CD4-positive, alpha-beta memory T cell (primary cell): ENCODE measurements at regions of chr14 and their contacts with region 1.

Region 1: DNA sequence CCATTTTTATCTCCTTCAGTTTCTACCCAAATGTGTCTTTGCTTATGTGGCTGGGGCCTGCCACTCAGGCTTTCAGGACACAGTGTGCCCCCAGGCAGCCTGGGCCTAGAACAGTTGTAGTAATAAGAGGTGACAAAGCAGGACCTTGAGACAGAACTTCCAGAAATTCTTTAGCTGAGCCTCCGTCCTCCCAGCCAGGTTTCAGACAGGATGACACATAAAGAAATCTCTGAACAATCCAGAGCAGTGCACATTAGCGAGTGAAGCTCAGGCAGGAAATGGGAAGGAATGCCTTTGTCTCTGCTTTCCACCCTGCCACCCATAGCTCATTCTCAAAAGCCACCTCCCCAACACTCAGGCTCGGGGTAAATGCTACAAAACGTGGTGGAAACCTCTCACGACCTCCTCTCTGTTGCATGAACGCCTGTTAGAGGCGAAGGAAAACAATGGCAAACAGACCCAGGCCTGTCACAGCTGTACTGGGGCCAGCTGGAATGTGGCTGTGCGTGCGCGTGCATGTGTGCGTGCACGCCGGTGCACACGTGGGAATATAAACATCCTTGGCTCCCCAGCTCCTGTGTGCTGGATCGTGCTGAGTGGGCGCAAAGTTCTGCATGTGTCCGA is 286.7 kb downstream of the ZFP36L1 start:
- DNase-seq: peak in 2 of 5 donors; percentile 9 to 39
- H3K4me3 ChIP-seq: peak overlapping the region; percentile 15 to 28
- H3K4me3 Mint-ChIP-seq: peak overlapping the region; percentile 63 to 86 (median 74)
- H3K27ac ChIP-seq: peak overlapping the region; percentile 27
- H3K27ac Mint-ChIP-seq: peak overlapping the region; percentile 60 to 93 (median 89)
- H3K4me1 ChIP-seq: peaks cover 45% of the 10 kb centered on the region
- H3K4me1 Mint-ChIP-seq: peaks cover 40 to 63% (median 52%) of the 10 kb centered on the region in 4 donors
- H3K27me3 ChIP-seq: no peaks in the 10 kb centered on the region
- H3K27me3 Mint-ChIP-seq: no peaks in the 10 kb centered on the region

Region 2: DNA sequence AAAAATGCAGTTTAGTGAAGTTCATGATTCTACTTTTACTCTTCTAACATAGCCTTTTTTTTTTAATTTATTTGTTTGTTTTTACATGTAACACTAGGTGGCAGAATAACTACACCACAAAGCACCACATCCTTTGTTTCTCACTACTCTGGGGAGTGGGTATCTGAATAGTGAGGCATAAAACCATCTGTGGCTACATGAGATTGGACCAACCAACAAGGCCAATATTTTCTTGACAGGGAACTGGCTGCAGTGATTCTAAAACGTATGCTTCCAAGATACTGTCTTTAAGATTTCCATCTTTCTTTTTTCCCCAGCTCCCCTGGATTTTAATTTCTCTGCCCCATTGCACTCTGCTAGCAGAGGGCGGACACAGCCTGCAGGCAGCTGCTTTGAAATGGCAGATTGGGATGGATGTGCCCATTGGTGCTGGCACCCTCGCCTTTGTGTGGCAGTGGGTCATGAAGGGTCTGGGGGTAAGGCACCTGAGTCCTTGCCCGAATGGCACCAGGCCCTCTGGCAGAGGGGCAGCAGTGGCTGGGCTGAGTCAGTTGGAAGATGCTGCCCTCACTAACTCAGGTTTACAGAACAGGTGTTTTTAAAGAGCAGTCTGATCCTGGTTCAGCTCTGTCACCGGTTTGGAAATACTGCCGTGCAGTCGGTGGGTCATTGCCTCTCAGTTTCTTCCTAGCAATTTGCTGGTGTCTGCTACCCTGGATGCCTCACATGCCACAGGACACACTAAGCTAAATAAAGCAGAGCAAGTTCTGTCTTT is 257.5 kb before region 1 on chr14:
- CTCF ChIA-PET with region 1: interaction called, 11 read pairs
- POLR2A ChIA-PET with region 1: interaction called, 14 read pairs
- intact Hi-C with region 1: loop called (anchors 5 kb)
- DNase-seq: peak; percentile 43 to 65 (median 62)
- H3K4me3 ChIP-seq: no peak overlapping the region
- H3K4me3 Mint-ChIP-seq: no peak overlapping the region
- H3K27ac ChIP-seq: no peak overlapping the region
- H3K27ac Mint-ChIP-seq: peak overlapping the region in 3 of 7 donors; percentile 55 to 61 (median 61)
- H3K4me1 ChIP-seq: peaks cover 24% of the 10 kb centered on the region
- H3K4me1 Mint-ChIP-seq: peaks cover 12 to 38% (median 24%) of the 10 kb centered on the region in 4 donors
- H3K27me3 ChIP-seq: no peaks in the 10 kb centered on the region
- H3K27me3 Mint-ChIP-seq: no peaks in the 10 kb centered on the region

Region 3: GRCh38 chr14:68451696-68452373 is 54.3 kb before region 1 on chr14:
- CTCF ChIA-PET with region 1: no interaction called
- POLR2A ChIA-PET with region 1: no interaction called
- intact Hi-C with region 1: no loop called
- DNase-seq: no peak
- H3K4me3 ChIP-seq: no peak overlapping the region
- H3K4me3 Mint-ChIP-seq: no peak overlapping the region
- H3K27ac ChIP-seq: no peak overlapping the region
- H3K27ac Mint-ChIP-seq: peak overlapping the region in 1 of 7 donors; percentile 6
- H3K4me1 ChIP-seq: no peaks in the 10 kb centered on the region
- H3K4me1 Mint-ChIP-seq: peaks cover 0 to 11% (median 3%) of the 10 kb centered on the region in 4 donors
- H3K27me3 ChIP-seq: no peaks in the 10 kb centered on the region
- H3K27me3 Mint-ChIP-seq: no peaks in the 10 kb centered on the region

Region 4: GRCh38 chr14:68487805-68488590 is 18.1 kb before region 1 on chr14:
- CTCF ChIA-PET with region 1: interaction called, 4 read pairs
- POLR2A ChIA-PET with region 1: interaction called, 55 read pairs
- intact Hi-C with region 1: loop called (anchors 2 kb)
- DNase-seq: no peak
- H3K4me3 ChIP-seq: no peak overlapping the region
- H3K4me3 Mint-ChIP-seq: no peak overlapping the region
- H3K27ac ChIP-seq: no peak overlapping the region
- H3K27ac Mint-ChIP-seq: no peak overlapping the region
- H3K4me1 ChIP-seq: peaks cover 31% of the 10 kb centered on the region
- H3K4me1 Mint-ChIP-seq: peaks cover 29 to 55% (median 38%) of the 10 kb centered on the region in 4 donors
- H3K27me3 ChIP-seq: no peaks in the 10 kb centered on the region
- H3K27me3 Mint-ChIP-seq: no peaks in the 10 kb centered on the region

Region 5: DNA sequence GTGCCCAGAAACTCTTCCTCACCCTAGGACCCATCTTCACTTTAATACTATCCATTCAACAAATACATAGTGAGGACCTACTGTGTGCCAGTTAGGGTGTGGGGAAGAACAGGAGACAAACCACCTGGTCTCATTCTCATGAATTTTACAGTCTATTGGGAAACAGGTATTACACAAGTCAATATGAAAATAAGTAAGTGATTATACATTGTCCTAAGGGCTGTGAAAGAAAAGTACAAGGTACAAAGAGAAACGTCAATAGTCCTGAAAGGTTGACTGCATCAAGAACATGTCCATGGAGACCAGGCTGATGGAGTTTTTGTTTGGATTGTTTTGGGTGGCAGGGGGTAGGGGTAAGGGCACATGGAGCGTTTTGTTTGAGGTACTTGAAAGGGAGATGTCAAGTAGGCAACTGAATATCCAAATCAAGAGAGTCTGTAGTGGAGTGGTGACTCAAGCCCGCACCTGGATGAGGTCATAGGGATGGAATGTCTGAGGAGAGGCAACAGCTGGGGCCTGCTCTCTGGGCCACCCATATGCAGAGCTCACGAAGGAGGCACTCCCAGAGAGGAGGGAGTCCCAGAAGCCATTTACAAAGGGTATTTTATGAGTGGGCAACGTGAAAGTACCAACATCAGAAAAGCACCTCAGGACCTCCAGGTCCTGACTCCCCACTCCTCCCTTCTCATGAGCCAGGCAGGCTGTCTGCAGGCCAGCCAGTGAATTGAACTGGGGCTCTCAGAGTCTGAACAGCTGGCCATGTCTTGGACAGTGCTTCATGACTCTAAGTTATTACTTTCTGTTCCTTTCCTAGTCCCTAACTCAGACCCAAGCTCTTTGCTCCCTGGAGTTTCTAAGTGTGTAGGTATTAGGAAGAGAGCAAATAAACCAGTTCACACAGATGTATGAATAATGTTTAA is 14.8 kb after region 1 on chr14:
- CTCF ChIA-PET with region 1: interaction called, 20 read pairs
- POLR2A ChIA-PET with region 1: interaction called, 22 read pairs
- intact Hi-C with region 1: no loop called
- DNase-seq: no peak
- H3K4me3 ChIP-seq: no peak overlapping the region
- H3K4me3 Mint-ChIP-seq: no peak overlapping the region
- H3K27ac ChIP-seq: no peak overlapping the region
- H3K27ac Mint-ChIP-seq: peak overlapping the region in 1 of 7 donors; percentile 52
- H3K4me1 ChIP-seq: no peaks in the 10 kb centered on the region
- H3K4me1 Mint-ChIP-seq: peaks cover 0 to 7% (median 2%) of the 10 kb centered on the region in 4 donors
- H3K27me3 ChIP-seq: no peaks in the 10 kb centered on the region
- H3K27me3 Mint-ChIP-seq: no peaks in the 10 kb centered on the region

Region 6: GRCh38 chr14:68663385-68664076 is 157.4 kb after region 1 on chr14:
- CTCF ChIA-PET with region 1: no interaction called
- POLR2A ChIA-PET with region 1: interaction called, 10 read pairs
- intact Hi-C with region 1: no loop called
- DNase-seq: peak in 1 of 5 donors; percentile 13
- H3K4me3 ChIP-seq: peak overlapping the region; percentile 13 to 65
- H3K4me3 Mint-ChIP-seq: peak overlapping the region; percentile 83 to 97 (median 86)
- H3K27ac ChIP-seq: peak overlapping the region; percentile 3
- H3K27ac Mint-ChIP-seq: peak overlapping the region; percentile 14 to 93 (median 88)
- H3K4me1 ChIP-seq: peaks cover 33% of the 10 kb centered on the region
- H3K4me1 Mint-ChIP-seq: peaks cover 25 to 49% (median 32%) of the 10 kb centered on the region in 4 donors
- H3K27me3 ChIP-seq: no peaks in the 10 kb centered on the region
- H3K27me3 Mint-ChIP-seq: no peaks in the 10 kb centered on the region

Region 7: DNA sequence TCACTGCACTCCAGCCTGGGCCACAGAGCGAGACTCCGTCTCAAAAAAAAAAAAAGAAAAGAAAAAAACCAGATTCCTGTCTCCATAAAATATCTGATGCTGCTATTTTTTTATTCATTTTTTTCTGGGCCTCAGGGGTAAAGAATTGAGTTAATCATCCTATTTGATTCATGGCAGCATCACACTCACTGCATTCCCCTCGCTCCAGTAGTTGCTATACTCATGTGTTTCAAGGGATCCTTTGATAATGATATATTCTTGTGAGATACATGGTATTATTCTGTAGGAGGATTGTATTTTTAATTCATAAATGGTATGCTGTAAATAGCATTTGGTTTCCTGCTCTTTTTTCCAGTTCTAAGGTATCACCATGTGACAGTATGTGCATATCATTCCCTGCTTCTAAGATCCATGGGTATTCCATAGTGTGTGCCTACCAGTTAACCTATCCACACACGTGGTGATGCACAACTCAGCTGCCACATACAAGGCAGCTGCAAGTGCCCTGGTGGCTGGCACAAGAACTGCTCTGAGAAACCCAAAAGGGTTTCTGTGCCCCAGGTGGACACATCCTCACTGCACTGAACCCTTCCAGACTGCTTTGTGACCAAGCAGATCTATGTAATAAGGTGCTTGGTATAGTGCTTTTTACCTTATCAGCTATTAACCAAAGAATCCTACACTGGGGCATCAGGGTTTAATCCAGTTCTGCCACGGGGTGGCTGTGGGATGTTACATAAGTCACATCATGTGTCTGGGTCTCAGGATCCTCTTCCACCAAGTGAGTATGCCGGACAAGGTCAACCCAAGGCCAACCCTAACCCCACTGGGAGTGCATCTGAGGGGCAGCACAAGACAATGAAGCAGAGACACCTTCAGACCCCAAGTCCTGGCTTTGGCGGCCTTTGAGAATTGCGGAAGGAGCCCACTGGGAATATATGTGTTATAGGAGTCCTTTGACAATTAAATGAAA is 212.2 kb after region 1 on chr14:
- CTCF ChIA-PET with region 1: no interaction called
- POLR2A ChIA-PET with region 1: interaction called, 17 read pairs
- intact Hi-C with region 1: no loop called
- DNase-seq: no peak
- H3K4me3 ChIP-seq: no peak overlapping the region
- H3K4me3 Mint-ChIP-seq: no peak overlapping the region
- H3K27ac ChIP-seq: no peak overlapping the region
- H3K27ac Mint-ChIP-seq: peak overlapping the region in 2 of 7 donors; percentile 11 to 35
- H3K4me1 ChIP-seq: peaks cover 40% of the 10 kb centered on the region
- H3K4me1 Mint-ChIP-seq: peaks cover 29 to 66% (median 40%) of the 10 kb centered on the region in 4 donors
- H3K27me3 ChIP-seq: no peaks in the 10 kb centered on the region
- H3K27me3 Mint-ChIP-seq: no peaks in the 10 kb centered on the region